ENCODE measurements at regions of chr1 and their contacts with region 1.

Region 1: GRCh38 chr1:177780096-177780700 is 189.7 kb downstream of the SEC16B start:
- DNase-seq: peak; percentile 10
- H3K4me3 ChIP-seq: no peak overlapping the region
- CTCF ChIP-seq: peak; percentile 38

Region 2: GRCh38 chr1:177790558-177790957 is 10.4 kb after region 1 on chr1:
- CTCF ChIA-PET with region 1: interaction called, 10 read pairs
- POLR2A ChIA-PET with region 1: no interaction called
- DNase-seq: no peak
- H3K4me3 ChIP-seq: no peak overlapping the region
- CTCF ChIP-seq: no peak